Activated CD8-positive, alpha-beta T cell treated with anti-CD3 and anti-CD28 coated beads, Interleukin-2, amount 10 ng/mL, durations not matched to agents 7 days and 5 days (primary cell): ENCODE measurements at regions of chr6 and their contacts with region 1.

Region 1: GRCh38 chr6:14144678-14145113 is 27.1 kb downstream of the CD83 start:
- DNase-seq: peak; percentile 79
- ATAC-seq: peak; percentile 88
- H3K4me3 Mint-ChIP-seq: no peak overlapping the region
- H3K27ac Mint-ChIP-seq: no peak overlapping the region
- H3K4me1 Mint-ChIP-seq: peaks cover 6% of the 10 kb centered on the region
- H3K27me3 Mint-ChIP-seq: no peaks in the 10 kb centered on the region

Region 2: DNA sequence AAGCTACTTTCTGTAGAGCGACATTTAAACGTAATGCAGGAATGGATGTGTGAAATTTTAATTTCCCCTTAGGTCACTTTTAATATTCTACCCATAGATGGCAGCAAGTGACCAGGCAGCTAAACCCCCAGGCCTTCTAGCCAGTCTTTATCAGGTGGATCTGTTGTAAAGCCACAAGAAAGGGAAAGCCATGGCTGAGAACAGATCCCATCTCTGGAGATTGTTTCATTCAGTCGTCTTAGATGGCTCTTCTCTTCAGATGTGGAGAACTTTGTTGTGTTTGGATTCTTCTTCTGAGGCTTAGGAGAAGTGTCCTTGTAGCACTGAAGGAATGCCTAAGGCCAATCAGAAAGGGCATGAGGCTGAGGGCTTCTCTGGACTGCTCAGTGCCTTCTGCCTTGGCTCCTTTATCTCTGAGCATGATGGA is 235.7 kb before region 1 on chr6:
- CTCF ChIA-PET with region 1: interaction called, 13 read pairs
- POLR2A ChIA-PET with region 1: interaction called, 3 read pairs
- DNase-seq: peak; percentile 58
- ATAC-seq: peak; percentile 79
- H3K4me3 Mint-ChIP-seq: no peak overlapping the region
- H3K27ac Mint-ChIP-seq: no peak overlapping the region
- H3K4me1 Mint-ChIP-seq: peaks cover 1% of the 10 kb centered on the region
- H3K27me3 Mint-ChIP-seq: peaks cover 44% of the 10 kb centered on the region

Region 3: GRCh38 chr6:14031516-14031915 is 113.2 kb before region 1 on chr6:
- CTCF ChIA-PET with region 1: no interaction called
- POLR2A ChIA-PET with region 1: no interaction called
- DNase-seq: no peak
- ATAC-seq: no peak
- H3K4me3 Mint-ChIP-seq: no peak overlapping the region
- H3K27ac Mint-ChIP-seq: no peak overlapping the region
- H3K4me1 Mint-ChIP-seq: no peaks in the 10 kb centered on the region
- H3K27me3 Mint-ChIP-seq: peaks cover 23% of the 10 kb centered on the region

Region 4: DNA sequence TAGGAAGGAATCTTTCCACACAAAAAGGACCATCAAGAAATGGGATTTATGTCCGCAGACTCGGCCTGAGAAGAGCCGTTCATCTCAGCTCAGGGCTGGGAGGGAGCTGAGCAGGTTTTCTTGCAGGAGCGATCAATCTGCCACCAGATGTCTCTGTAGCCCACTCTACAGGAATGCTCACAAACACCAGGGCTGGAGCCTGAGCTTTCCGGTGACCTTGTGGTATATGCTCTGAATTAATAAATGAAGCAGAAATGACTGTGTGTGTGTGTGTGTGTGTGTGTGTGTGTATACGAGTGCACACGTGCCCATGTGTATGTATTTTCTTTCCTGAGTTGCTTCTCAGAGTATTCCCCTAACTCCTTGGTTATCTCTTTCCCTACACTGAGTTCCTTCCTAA is 15.1 kb before region 1 on chr6:
- CTCF ChIA-PET with region 1: interaction called, 56 read pairs
- POLR2A ChIA-PET with region 1: interaction called, 3 read pairs
- DNase-seq: peak; percentile 66
- ATAC-seq: peak; percentile 72
- H3K4me3 Mint-ChIP-seq: no peak overlapping the region
- H3K27ac Mint-ChIP-seq: no peak overlapping the region
- H3K4me1 Mint-ChIP-seq: peaks cover 18% of the 10 kb centered on the region
- H3K27me3 Mint-ChIP-seq: no peaks in the 10 kb centered on the region